H1 (cell line): ENCODE measurements at regions of chr12 and their contacts with region 1.

Region 1: DNA sequence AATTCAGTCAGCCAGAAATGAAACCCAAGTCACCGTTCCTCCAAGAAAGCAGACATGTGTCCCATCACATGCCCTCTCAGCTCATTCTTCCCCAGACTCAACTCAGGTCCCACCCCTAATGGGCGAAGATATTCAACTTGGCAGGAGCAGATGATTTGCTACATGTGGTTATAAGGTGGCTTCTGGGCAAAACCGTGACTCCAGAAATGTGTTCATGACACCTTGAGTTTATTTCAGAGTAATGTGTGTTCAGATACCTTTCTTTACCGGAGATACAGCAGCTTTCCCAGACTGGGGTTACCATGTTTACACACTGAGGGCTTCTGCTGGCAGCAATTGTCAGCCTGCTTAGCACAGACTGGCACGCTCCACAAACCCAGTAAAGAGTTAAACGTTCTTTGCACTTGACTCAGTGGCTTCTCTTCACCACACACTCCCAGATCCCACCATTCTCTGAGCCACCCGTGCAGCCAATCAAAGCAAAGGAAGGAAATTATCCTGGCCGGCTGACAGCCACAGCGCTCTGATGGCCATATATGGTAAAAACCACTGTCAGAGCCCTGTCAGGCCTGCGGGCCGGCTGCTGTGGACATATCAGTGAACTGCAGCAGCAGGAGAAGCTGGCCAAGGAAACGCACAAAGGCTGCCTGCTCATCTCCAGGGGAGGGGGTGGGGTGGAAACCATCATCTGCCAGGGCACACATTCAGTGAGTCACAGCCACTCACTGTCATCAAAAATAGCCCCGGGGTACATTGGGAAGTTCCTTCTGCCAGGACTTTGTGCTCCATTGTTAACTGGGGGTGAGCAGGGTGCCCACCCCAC is 39.9 kb downstream of the CORO1C start:
- DNase-seq: peak; percentile 76 to 82
- H3K4me3 ChIP-seq: no peak overlapping the region; a peak in 1 of 8 replicates
- H3K27ac ChIP-seq: peak overlapping the region; percentile 87
- H3K4me1 ChIP-seq: peaks cover 9 to 24% (median 15%) of the 10 kb centered on the region in 4 experiments
- H3K27me3 ChIP-seq: no peaks in the 10 kb centered on the region
- CTCF ChIP-seq: peak; percentile 22 to 37 (median 30)
- EP300 ChIP-seq: peak in 1 of 2 experiments; percentile 12; a peak in 2 of 3 replicates
- POLR2A ChIP-seq: peak in 1 of 2 experiments; percentile 67; a peak in 2 of 3 replicates
- RAD21 ChIP-seq: peak; percentile 31 to 36; a peak in 2 of 4 replicates

Region 2: DNA sequence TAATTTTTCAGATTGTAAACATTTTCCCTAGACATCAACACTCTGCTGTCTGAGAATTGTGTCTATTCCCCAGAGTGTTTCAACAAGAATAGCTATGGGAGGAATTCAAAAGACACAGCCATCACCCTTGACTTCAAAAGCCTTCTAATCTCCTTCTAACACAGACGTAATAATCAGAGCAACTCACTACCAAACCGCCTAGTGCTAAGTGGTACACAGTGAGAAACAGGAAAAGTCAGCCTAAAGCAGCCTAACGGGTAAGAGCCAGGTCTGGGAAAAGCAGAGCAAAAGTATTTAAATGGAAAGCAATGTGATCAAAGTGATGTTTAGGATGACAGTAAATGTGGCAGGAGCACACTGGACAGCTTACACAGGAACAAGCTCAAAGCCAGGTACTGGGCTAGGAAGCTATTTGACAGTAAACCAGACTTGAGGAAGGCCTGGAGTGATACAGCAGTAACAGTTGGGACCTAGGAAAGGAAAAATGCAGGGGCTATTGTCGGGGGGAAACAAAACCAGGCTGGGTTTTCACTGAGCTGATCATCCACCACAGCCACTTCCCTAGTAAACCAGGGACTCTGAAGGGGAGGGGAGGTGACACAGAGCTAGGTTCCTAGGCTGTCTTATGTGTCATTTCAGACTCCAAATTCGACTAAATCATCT is 10.5 kb after region 1 on chr12:
- CTCF ChIA-PET with region 1: interaction called, 6 read pairs
- POLR2A ChIA-PET with region 1: interaction called, 10 read pairs
- DNase-seq: no peak
- H3K4me3 ChIP-seq: no peak overlapping the region
- H3K27ac ChIP-seq: peak overlapping the region; percentile 22; the same call in 1 of the 2 replicates
- H3K4me1 ChIP-seq: peaks cover 6 to 16% (median 10%) of the 10 kb centered on the region in 4 experiments; a peak in 6 of 7 replicates
- H3K27me3 ChIP-seq: no peaks in the 10 kb centered on the region
- CTCF ChIP-seq: no peak
- EP300 ChIP-seq: no peak
- POLR2A ChIP-seq: no peak
- RAD21 ChIP-seq: no peak

Region 3: GRCh38 chr12:108712165-108712924 is 21.0 kb after region 1 on chr12:
- CTCF ChIA-PET with region 1: interaction called, 5 read pairs
- POLR2A ChIA-PET with region 1: interaction called, 29 read pairs
- DNase-seq: peak in 1 of 2 experiments; percentile 37
- H3K4me3 ChIP-seq: no peak overlapping the region
- H3K27ac ChIP-seq: no peak overlapping the region
- H3K4me1 ChIP-seq: peaks cover 3 to 14% (median 5%) of the 10 kb centered on the region in 4 experiments; a peak in 4 of 7 replicates
- H3K27me3 ChIP-seq: no peaks in the 10 kb centered on the region
- CTCF ChIP-seq: no peak
- EP300 ChIP-seq: no peak
- POLR2A ChIP-seq: no peak
- RAD21 ChIP-seq: no peak

Region 4: DNA sequence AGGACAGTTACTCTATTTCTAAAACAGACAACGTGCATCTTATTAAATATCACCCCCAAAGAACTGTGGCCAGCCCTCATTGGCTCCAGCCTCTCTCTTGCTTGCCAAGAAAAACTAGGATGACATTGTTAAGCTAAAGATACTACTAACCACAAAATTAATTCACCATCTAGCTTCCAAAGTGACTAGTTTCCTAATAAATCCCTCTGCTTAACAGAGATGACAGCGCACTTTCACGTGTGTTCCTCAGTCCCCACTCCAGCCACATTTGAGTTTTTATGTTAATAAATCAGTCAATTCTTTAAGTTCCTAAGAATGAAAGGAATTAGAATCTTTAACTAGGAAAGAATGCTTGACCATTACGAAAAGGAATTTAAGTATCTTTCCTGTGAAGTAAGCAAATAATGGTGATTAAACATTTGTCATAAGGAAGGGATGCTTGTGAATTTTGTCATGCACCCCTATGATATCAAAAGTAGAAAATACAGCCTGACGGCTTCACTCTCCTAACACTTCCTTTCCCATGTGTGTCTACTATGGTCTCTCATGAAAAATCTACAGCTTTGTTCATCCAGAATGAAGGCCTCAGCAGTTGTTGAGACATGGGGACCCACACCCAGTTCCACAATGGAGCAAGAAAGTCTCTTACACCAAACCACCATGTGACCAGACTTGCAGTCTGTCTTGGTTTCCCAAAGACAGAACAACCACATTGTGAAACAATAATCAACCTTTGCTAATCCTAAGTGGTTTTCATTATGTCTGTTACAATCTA is 31.8 kb after region 1 on chr12:
- CTCF ChIA-PET with region 1: interaction called, 10 read pairs
- POLR2A ChIA-PET with region 1: interaction called, 6 read pairs
- DNase-seq: no peak
- H3K4me3 ChIP-seq: no peak overlapping the region
- H3K27ac ChIP-seq: no peak overlapping the region
- H3K4me1 ChIP-seq: peaks cover 0 to 13% (median 3%) of the 10 kb centered on the region in 4 experiments; a peak in 5 of 7 replicates
- H3K27me3 ChIP-seq: no peaks in the 10 kb centered on the region
- CTCF ChIP-seq: no peak
- EP300 ChIP-seq: no peak
- POLR2A ChIP-seq: no peak
- RAD21 ChIP-seq: no peak